ENCODE measurements at regions of chr4 and their contacts with region 1.

Region 1: GRCh38 chr4:22668301-22668700 is 24.4 kb upstream of the GBA3 start:
- DNase-seq: no peak
- H3K4me3 Mint-ChIP-seq: no peak overlapping the region
- H3K27ac Mint-ChIP-seq: no peak overlapping the region
- H3K4me1 Mint-ChIP-seq: peaks cover 34% of the 10 kb centered on the region
- H3K27me3 Mint-ChIP-seq: peaks cover 2% of the 10 kb centered on the region

Region 2: DNA sequence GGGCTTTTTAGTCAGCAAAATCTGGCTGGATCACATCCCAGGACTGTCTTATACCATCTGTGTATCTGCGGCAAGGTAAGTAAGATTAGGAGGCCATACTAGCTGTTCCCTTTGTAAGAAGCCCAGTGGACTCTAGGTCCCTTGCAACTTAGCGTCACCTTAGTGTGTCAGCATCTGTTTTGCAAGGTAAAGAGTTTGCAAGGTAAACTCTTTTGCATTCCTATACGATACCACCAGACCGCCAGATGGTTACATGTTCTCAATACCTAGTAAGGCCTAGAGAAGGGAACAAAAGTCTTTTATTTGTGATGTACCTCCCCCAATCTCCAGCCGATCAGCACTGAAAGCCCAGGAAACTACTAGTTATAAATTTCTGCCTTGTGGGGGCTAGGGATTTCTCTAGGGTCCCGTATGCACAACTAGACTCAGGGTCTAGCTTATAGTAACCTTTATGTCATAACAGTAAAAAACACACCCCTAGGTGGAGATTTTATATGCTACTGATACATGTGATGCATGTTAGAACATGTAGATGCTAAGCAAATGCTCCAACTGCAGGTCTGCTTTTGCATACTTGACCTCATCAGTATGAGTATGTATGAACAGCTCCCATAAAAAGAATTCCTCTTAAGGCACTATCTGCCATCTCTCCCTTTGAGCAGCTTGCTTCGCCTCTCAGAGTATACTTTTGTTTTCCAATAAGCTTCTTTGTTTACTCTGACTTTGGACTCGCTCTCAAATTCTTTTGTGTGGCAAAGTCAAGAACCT is 798.1 kb before region 1 on chr4:
- intact Hi-C with region 1: no loop called
- DNase-seq: no peak
- H3K4me3 Mint-ChIP-seq: no peak overlapping the region
- H3K27ac Mint-ChIP-seq: no peak overlapping the region
- H3K4me1 Mint-ChIP-seq: no peaks in the 10 kb centered on the region
- H3K27me3 Mint-ChIP-seq: no peaks in the 10 kb centered on the region

Region 3: GRCh38 chr4:22634541-22635181 is 33.6 kb before region 1 on chr4:
- intact Hi-C with region 1: no loop called
- DNase-seq: no peak
- H3K4me3 Mint-ChIP-seq: no peak overlapping the region
- H3K27ac Mint-ChIP-seq: no peak overlapping the region
- H3K4me1 Mint-ChIP-seq: no peaks in the 10 kb centered on the region
- H3K27me3 Mint-ChIP-seq: no peaks in the 10 kb centered on the region

Region 4: GRCh38 chr4:22650771-22651170 is 17.5 kb before region 1 on chr4:
- intact Hi-C with region 1: no loop called
- DNase-seq: no peak
- H3K4me3 Mint-ChIP-seq: no peak overlapping the region
- H3K27ac Mint-ChIP-seq: no peak overlapping the region
- H3K4me1 Mint-ChIP-seq: no peaks in the 10 kb centered on the region
- H3K27me3 Mint-ChIP-seq: no peaks in the 10 kb centered on the region

Region 5: GRCh38 chr4:22707390-22707789 is 39.1 kb after region 1 on chr4:
- intact Hi-C with region 1: loop called (anchors 5 kb)
- DNase-seq: no peak
- H3K4me3 Mint-ChIP-seq: no peak overlapping the region
- H3K27ac Mint-ChIP-seq: peak overlapping the region; percentile 21
- H3K4me1 Mint-ChIP-seq: peaks cover 11% of the 10 kb centered on the region
- H3K27me3 Mint-ChIP-seq: no peaks in the 10 kb centered on the region

Measured in activated T-helper 1 cell treated with anti-CD3 and anti-CD28 coated beads, Interleukin-12 subunit alpha, Interleukin-12 subunit beta, Interleukin-2, Interleukin-4 antibody, amounts not matched to agents 30 ng/mL and 10 ng/mL and 1 ng/mL, durations not matched to agents 14 hours and 24 hours and 36 hours (primary cell).